ENCODE measurements at regions of chr15 and their contacts with region 1.

Region 1: GRCh38 chr15:60772395-60773120 is 293.6 kb upstream of the ICE2 start:
- DNase-seq: no peak
- CTCF ChIP-seq: no peak

Region 2: DNA sequence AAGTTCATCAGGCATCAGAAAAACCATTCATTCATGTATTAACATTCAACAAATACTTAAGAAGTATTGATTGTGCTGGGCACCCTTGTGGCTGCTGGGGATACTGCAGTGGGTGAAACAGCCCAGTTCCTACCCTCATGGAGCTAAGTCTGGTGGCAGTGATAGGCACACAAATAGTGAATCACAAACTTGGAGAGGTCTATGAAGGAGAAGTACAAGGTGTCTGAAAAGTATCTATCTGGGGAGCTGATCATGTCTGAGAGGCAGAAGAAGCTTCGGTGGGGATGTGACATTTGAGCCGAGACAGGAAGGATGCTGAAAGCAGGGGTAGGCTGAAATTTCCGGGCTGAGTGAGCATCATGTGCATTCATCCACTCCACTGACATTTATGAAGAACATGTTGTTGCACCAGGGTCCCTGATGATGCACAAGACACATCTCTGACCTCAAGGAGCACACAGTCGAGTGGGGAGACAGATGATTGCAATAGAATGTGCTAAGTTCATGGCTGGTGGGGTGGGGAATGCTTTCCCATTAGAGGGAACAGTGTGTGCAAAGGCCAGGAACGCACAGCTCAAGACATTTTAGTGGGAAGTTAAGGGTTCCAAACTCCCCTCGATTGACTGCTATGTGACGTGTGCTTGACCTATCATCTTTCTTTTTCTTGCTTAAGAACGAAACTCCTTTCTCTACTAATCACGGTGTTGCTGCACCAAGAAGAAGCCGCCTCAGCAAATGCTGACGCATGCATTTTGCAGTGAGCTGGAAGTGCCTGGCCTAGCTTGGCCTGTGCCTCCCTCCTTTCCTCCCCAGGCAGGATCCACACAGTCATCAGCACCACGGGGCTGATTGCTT is 15.5 kb after region 1 on chr15:
- CTCF ChIA-PET with region 1: interaction called, 11 read pairs
- POLR2A ChIA-PET with region 1: no interaction called
- DNase-seq: no peak
- CTCF ChIP-seq: peak; percentile 26

Region 3: GRCh38 chr15:60798821-60799220 is 26.3 kb after region 1 on chr15:
- CTCF ChIA-PET with region 1: no interaction called
- POLR2A ChIA-PET with region 1: no interaction called
- DNase-seq: peak; percentile 48
- CTCF ChIP-seq: no peak

Measured in GM10248 (cell line).